Colonic mucosa (tissue), 4 donors: ENCODE measurements at regions of chr18 and their contacts with region 1.

Region 1: DNA sequence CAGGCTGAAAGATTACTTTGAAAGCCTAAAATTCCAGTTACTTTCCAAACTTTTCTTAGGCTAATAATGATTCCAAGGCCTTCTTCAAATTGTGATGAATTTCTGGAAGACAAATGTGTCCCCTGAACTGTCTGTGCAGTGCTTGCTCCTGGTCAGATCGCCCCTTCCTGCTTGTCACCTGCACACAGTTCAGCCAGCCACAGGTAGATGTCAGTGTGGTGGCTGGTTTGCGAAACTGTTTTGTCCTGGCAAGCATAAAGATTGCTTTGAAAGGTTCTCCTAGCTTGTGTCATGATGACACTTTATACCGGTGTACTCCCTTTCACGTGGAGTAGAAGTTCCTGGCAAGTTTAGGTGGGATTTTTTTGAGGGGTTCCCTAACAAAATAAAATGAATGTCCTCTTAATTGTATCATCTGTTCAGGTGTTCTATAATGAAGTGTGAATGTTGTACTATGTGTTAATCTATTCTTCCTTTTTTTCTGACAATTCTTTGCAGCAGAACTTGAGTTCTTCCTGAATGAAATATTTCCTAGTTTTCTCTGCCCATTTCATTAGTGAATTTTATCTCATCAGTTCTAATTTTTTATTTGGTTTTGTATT is 298.8 kb downstream of the ZNF407 start:
- DNase-seq: peak; percentile 42
- H3K4me3 ChIP-seq: no peak overlapping the region
- H3K27ac ChIP-seq: no peak overlapping the region
- H3K4me1 ChIP-seq: no peaks in the 10 kb centered on the region
- H3K27me3 ChIP-seq: no peaks in the 10 kb centered on the region
- CTCF ChIP-seq: peak; percentile 61

Region 2: GRCh38 chr18:74196220-74197119 is 700.0 kb before region 1 on chr18:
- intact Hi-C with region 1: no loop called
- DNase-seq: peak; percentile 34
- H3K4me3 ChIP-seq: no peak overlapping the region
- H3K27ac ChIP-seq: no peak overlapping the region
- H3K4me1 ChIP-seq: no peaks in the 10 kb centered on the region
- H3K27me3 ChIP-seq: no peaks in the 10 kb centered on the region
- CTCF ChIP-seq: peak; percentile 89

Region 3: GRCh38 chr18:75041586-75041985 is 145.1 kb after region 1 on chr18:
- intact Hi-C with region 1: loop called (anchors 10 kb)
- DNase-seq: no peak
- H3K4me3 ChIP-seq: no peak overlapping the region
- H3K27ac ChIP-seq: no peak overlapping the region
- H3K4me1 ChIP-seq: no peaks in the 10 kb centered on the region
- H3K27me3 ChIP-seq: no peaks in the 10 kb centered on the region
- CTCF ChIP-seq: peak; percentile 33

Region 4: DNA sequence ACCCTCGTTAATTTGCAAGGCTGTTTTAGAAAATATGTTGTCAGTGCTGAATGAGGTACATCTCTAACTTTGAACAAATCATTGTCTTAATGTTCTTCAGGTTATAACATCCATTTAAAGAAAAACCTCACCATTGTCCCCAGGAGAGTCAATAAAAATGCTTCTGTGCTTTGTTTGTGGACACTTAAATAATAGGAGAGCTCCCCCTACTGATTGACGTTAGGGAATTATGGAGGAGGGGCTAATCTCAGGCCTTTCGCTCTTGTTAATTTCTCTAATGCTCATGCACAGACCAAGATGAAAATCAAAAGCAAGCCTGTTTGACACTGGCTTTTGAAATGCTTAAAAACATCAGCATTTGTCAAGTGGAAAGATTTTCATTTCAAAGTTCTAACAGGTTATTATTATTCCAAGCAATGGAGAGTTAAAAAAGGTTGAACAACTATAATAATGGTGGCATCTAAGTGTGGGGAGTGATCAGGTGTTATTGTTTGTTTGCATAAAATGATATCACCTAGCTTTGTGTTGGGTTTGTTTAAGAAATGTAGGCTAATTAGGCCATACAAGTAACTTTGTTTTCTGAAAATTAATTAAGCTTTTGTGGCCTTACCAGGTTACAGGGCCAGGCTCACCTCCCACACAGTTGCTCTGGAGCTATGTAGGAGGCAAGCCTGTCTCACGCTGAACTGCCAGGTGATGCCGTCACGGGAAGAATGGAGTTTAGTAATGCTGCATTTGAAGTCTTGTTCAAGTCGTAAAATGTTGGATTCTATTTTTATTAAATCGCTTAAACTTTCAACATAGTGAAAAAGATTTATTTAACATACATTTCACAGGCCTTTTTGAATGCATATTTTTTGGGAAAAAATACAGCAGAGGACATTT is 582.7 kb after region 1 on chr18:
- intact Hi-C with region 1: loop called (anchors 10 kb)
- DNase-seq: no peak
- H3K4me3 ChIP-seq: no peak overlapping the region
- H3K27ac ChIP-seq: no peak overlapping the region
- H3K4me1 ChIP-seq: no peaks in the 10 kb centered on the region
- H3K27me3 ChIP-seq: no peaks in the 10 kb centered on the region
- CTCF ChIP-seq: peak; percentile 47